ENCODE measurements at regions of chr2 and their contacts with region 1.

Region 1: DNA sequence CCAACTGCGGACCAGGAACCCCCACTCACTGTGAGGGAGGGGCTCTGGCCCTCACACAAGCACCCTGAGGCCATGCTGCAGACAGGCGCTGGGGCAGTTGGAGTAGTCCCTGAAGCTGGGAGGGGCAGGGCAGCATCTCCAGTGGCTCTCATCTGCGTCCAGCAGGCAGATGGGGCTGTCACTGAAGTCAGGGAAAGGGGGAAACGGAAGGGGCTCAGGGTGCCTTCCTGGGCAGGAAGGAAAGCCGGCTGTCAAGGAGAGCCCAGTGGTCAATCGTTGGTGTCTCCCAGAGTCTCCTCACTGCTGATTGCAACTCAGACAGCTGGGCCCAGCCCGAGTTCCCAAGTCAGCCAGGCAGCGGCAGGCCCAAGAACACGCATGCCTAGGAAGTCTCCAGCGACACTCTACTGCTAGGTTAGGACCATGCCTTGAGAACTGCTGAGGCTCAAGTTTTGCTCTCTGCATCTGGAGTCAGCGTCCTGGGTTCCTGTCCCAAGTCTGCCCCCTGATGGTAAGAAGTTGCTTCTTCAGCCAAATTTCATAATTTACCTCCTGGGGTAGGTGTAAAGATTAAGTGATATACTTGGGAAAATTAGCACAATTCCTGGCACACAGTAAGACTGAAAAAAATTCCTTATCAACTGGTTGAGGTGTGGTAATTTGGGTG is 27.5 kb upstream of the NMUR1 start:
- DNase-seq: peak; percentile 90
- H3K4me3 Mint-ChIP-seq: no peak overlapping the region
- H3K27ac Mint-ChIP-seq: no peak overlapping the region
- H3K4me1 Mint-ChIP-seq: peaks cover 29% of the 10 kb centered on the region
- H3K27me3 Mint-ChIP-seq: peaks cover 1% of the 10 kb centered on the region

Region 2: GRCh38 chr2:231227309-231228162 is 330.2 kb before region 1 on chr2:
- intact Hi-C with region 1: loop called (anchors 10 kb)
- DNase-seq: peak; percentile 85
- H3K4me3 Mint-ChIP-seq: no peak overlapping the region
- H3K27ac Mint-ChIP-seq: no peak overlapping the region
- H3K4me1 Mint-ChIP-seq: no peaks in the 10 kb centered on the region
- H3K27me3 Mint-ChIP-seq: no peaks in the 10 kb centered on the region

Region 3: DNA sequence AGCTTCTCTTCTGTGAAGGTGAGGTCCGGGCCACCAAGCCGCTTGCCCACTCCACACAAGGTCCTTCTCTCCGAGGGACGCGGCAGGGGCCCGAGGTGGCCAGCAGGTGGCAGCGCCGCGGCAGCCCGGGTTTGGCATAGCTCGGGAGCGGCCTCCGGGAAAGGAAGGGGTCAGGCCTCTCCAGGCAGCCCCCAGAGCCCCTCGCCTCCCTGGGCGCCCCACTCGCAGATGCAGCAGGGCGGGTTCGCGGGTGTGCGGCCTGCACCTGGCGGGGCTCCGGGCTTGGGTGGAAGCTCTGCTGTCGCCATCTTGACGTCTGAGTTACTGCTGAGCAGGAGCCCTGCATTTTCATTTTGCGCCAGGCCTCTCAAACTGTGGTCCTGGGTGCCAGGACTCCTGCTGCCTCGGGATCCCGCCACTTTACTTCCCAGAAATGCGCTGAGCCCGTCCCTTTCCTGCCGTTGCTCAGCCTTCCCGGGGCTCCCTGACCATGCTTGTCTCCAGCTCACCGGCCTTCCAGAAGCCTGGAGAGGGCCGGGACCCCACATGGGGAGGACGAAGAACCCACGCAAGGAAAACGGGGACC is 74.8 kb before region 1 on chr2:
- intact Hi-C with region 1: loop called (anchors 1 kb)
- DNase-seq: peak; percentile 93
- H3K4me3 Mint-ChIP-seq: peak overlapping the region; percentile 84
- H3K27ac Mint-ChIP-seq: peak overlapping the region; percentile 94
- H3K4me1 Mint-ChIP-seq: peaks cover 10% of the 10 kb centered on the region
- H3K27me3 Mint-ChIP-seq: peaks cover 3% of the 10 kb centered on the region

Region 4: DNA sequence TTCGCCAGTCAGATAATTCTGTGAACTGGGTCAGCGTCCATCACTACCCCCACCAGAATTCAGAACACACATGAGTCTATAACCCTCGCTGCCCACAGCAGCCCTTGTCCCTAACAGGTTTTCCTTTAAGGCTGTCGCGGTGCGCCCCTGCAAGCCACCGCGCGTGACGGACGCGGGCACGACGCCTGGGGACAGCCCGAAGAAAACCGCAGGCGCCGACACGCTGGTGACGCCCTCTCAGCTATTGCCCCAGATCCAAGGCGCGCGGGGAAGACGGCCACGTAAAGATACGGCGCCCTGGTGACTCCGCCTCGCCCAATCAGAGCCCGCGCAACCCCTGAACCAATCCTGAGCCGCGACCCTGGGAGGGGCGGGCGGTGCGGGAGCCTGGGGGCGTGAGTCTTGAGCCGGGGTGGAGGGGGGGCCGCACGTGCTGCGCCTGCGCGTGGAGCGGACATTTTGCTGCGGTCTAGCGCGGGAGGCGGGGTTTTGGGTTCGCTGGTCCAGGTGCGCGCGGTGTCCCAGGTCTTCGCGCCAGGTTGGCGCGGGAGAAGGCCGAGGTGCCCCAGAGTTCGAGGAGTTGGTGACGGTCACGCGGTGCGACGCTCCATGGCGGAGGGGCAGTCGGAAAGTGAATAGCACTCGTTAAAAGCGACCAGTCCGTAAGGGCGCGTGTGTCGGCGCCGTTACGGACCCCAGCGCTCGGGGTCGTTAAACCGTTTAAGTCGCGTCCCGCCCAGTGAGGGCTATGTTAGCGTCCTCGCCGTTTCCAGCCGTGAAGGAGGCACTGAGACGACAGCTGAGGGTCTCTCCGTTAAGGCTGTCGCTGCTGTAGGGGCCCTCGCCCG is 43.4 kb before region 1 on chr2:
- intact Hi-C with region 1: loop called (anchors 1 kb)
- DNase-seq: peak; percentile 99
- H3K4me3 Mint-ChIP-seq: peak overlapping the region; percentile 94
- H3K27ac Mint-ChIP-seq: peak overlapping the region; percentile 97
- H3K4me1 Mint-ChIP-seq: peaks cover 13% of the 10 kb centered on the region
- H3K27me3 Mint-ChIP-seq: peaks cover 6% of the 10 kb centered on the region

Region 5: DNA sequence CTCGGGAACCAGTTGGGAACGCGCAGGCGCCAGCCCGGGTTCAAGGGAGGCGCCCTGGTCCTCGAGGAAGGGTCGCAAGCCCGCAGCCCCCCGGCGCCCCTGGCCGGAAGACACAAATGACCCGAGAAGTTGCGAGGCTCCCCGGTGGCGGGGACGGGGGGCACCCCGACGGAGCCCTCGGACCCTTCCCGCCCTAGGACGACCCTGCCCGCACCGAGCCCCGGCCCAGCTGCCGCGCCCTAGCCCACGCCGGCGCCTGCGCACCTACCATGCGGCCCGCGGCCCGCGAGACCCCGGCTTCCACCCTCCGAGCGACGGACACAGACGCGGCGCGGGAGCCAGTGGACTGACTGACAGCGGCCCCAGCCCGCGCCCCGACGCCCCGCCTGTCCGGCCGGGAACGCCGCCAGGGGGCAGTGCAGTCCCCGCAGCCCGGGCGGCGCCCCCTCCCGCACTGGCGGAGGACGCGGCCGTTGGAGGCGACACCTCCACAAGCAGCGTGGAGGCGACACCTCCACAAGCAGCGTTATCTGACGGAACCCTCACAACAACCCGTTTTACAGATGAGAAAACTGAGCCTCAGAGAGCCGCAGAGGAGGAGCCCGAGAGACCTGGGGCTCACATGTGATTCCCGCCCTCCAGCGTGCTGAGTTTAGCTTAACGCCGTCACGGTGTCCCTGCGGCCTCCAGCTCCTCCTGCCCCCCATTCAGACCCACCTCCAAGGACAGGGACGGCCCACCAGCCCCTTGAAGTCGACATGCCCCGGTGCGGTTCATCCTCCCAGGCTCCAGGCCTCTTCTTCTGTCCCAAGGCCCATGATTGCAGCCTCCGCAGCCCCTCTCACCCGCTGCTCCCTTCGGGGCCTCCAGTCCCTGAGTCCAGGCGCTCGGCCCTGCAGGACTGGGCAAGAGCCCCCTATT is 27.4 kb before region 1 on chr2 and contains the start of gene NMUR1:
- intact Hi-C with region 1: loop called (anchors 1 kb)
- DNase-seq: peak; percentile 94
- H3K4me3 Mint-ChIP-seq: peak within 1 kb of the TSS; percentile 51
- H3K27ac Mint-ChIP-seq: no peak within 1 kb of the TSS
- H3K4me1 Mint-ChIP-seq: peaks cover 16% of the 10 kb centered on the region
- H3K27me3 Mint-ChIP-seq: peaks cover 33% of the 10 kb centered on the region
- total RNA-seq, gene NMUR1: 0.09 TPM in 1 of 2 replicates, not detected in the other

Region 6: GRCh38 chr2:231545105-231545902 is 12.4 kb before region 1 on chr2:
- intact Hi-C with region 1: loop called (anchors 1 kb)
- DNase-seq: peak; percentile 92
- H3K4me3 Mint-ChIP-seq: peak overlapping the region; percentile 72
- H3K27ac Mint-ChIP-seq: peak overlapping the region; percentile 91
- H3K4me1 Mint-ChIP-seq: peaks cover 39% of the 10 kb centered on the region
- H3K27me3 Mint-ChIP-seq: peaks cover 8% of the 10 kb centered on the region